Activated CD4-positive, alpha-beta T cell treated with anti-CD3 and anti-CD28 coated beads, Interleukin-2, amount 10 ng/mL, durations not matched to agents 24 days and 14 days (primary cell): ENCODE measurements at regions of chr17 and their contacts with region 1.

Region 1: DNA sequence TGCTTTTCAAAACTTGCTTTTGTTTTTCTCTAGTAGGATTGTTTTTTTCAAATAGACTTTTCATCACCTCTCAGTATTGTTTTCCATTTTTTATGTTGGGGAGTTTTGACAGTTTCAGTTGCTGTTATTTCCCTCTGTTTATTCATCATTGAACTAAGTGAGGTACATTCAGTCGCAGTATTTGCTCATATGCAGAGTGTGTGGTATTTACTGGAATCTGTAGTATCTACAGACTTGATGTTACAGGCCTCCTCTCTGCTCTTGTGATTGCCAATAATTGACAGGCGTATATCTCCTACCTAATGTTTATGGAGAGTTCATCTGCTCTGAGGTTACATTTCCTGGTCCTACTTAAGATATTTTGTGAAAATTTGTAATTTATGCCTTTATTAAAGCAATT is 49.6 kb downstream of the COX10 start:
- DNase-seq: peak; percentile 82
- H3K4me3 Mint-ChIP-seq: peak overlapping the region; percentile 40
- H3K27ac Mint-ChIP-seq: peak overlapping the region; percentile 92
- H3K4me1 Mint-ChIP-seq: peaks cover 82% of the 10 kb centered on the region
- H3K27me3 Mint-ChIP-seq: no peaks in the 10 kb centered on the region

Region 2: GRCh38 chr17:14069251-14070021 is 49.5 kb before region 1 on chr17 and contains the start of gene COX10:
- intact Hi-C with region 1: loop called (anchors 1 kb)
- DNase-seq: peak; percentile 97
- H3K4me3 Mint-ChIP-seq: peak within 1 kb of the TSS; percentile 96
- H3K27ac Mint-ChIP-seq: peak within 1 kb of the TSS; percentile 94
- H3K4me1 Mint-ChIP-seq: peaks cover 48% of the 10 kb centered on the region
- H3K27me3 Mint-ChIP-seq: no peaks in the 10 kb centered on the region
- total RNA-seq, gene COX10: 33.5 and 36.1 TPM in 2 replicates

Region 3: GRCh38 chr17:14080847-14081251 is 38.1 kb before region 1 on chr17:
- intact Hi-C with region 1: loop called (anchors 2 kb)
- DNase-seq: no peak
- H3K4me3 Mint-ChIP-seq: no peak overlapping the region
- H3K27ac Mint-ChIP-seq: peak overlapping the region; percentile 60
- H3K4me1 Mint-ChIP-seq: peaks cover 34% of the 10 kb centered on the region
- H3K27me3 Mint-ChIP-seq: no peaks in the 10 kb centered on the region

Region 4: DNA sequence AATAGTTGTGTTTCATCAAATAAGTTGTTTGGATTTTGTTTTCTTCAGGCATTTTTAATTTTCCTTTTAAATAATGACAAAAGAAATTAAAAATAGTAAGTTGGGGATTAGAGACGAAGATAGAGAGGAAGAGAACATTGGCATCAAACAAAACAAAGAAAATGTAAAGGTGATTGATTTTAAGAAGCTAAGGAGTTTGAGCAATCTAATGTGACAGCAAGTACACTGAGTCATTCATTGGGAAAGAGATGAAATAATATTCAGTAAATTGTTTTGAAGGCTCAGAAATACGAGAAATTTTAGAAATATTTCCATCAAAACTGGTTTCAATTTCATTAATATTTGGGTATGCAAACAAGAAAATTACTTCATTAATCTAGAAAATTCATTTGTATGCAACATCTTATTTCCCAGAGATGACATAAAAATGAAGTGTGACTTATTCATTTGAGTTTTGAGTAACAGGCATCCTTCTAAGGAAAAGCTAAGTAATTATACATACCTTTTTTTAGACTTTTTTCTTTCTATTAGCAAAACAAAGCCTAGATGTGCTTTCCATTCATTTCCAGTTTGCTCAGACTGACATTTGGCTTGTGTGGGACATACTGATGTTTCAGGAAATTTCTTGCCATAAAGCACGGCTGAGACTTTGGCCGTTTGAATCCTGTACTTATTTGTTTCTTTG is 17.1 kb after region 1 on chr17:
- intact Hi-C with region 1: loop called (anchors 2 kb)
- DNase-seq: no peak
- H3K4me3 Mint-ChIP-seq: no peak overlapping the region
- H3K27ac Mint-ChIP-seq: peak overlapping the region; percentile 28
- H3K4me1 Mint-ChIP-seq: peaks cover 12% of the 10 kb centered on the region
- H3K27me3 Mint-ChIP-seq: no peaks in the 10 kb centered on the region

Region 5: GRCh38 chr17:14197586-14197985 is 78.6 kb after region 1 on chr17:
- intact Hi-C with region 1: loop called (anchors 1 kb)
- DNase-seq: peak; percentile 88
- H3K4me3 Mint-ChIP-seq: peak overlapping the region; percentile 72
- H3K27ac Mint-ChIP-seq: peak overlapping the region; percentile 88
- H3K4me1 Mint-ChIP-seq: peaks cover 83% of the 10 kb centered on the region
- H3K27me3 Mint-ChIP-seq: no peaks in the 10 kb centered on the region

Region 6: GRCh38 chr17:14203388-14203787 is 84.4 kb after region 1 on chr17:
- intact Hi-C with region 1: loop called (anchors 1 kb)
- DNase-seq: peak; percentile 82
- H3K4me3 Mint-ChIP-seq: peak overlapping the region; percentile 52
- H3K27ac Mint-ChIP-seq: peak overlapping the region; percentile 81
- H3K4me1 Mint-ChIP-seq: peaks cover 76% of the 10 kb centered on the region
- H3K27me3 Mint-ChIP-seq: no peaks in the 10 kb centered on the region

Region 7: GRCh38 chr17:14268264-14268663 is 149.3 kb after region 1 on chr17:
- intact Hi-C with region 1: no loop called
- DNase-seq: peak; percentile 38
- H3K4me3 Mint-ChIP-seq: no peak overlapping the region
- H3K27ac Mint-ChIP-seq: no peak overlapping the region
- H3K4me1 Mint-ChIP-seq: no peaks in the 10 kb centered on the region
- H3K27me3 Mint-ChIP-seq: peaks cover 7% of the 10 kb centered on the region

Region 8: GRCh38 chr17:14337596-14338079 is 218.7 kb after region 1 on chr17:
- intact Hi-C with region 1: loop called (anchors 1 kb)
- DNase-seq: peak; percentile 58
- H3K4me3 Mint-ChIP-seq: peak overlapping the region; percentile 39
- H3K27ac Mint-ChIP-seq: peak overlapping the region; percentile 86
- H3K4me1 Mint-ChIP-seq: peaks cover 60% of the 10 kb centered on the region
- H3K27me3 Mint-ChIP-seq: no peaks in the 10 kb centered on the region